ENCODE measurements at regions of chr9 and their contacts with region 1.

Region 1: DNA sequence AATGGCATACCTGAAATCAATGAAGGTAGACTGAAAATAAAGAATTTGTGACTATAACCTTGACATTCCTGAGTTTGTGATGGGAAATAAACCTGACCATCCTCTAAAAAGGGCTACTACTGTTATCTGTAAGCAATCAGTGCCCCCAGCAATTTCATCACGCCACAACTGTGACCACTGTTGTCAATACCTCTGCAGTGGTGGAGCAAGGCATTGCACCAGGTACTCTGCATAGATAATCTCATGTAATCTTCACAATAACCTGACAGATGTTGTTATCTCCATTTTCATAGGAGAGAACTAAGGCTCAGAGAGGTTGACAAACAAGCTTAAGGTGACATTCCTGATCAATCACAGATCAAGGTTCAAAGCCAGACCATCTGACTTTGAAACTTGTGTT is 38.5 kb upstream of the FRRS1L start:
- DNase-seq: no peak
- CTCF ChIP-seq: no peak

Region 2: DNA sequence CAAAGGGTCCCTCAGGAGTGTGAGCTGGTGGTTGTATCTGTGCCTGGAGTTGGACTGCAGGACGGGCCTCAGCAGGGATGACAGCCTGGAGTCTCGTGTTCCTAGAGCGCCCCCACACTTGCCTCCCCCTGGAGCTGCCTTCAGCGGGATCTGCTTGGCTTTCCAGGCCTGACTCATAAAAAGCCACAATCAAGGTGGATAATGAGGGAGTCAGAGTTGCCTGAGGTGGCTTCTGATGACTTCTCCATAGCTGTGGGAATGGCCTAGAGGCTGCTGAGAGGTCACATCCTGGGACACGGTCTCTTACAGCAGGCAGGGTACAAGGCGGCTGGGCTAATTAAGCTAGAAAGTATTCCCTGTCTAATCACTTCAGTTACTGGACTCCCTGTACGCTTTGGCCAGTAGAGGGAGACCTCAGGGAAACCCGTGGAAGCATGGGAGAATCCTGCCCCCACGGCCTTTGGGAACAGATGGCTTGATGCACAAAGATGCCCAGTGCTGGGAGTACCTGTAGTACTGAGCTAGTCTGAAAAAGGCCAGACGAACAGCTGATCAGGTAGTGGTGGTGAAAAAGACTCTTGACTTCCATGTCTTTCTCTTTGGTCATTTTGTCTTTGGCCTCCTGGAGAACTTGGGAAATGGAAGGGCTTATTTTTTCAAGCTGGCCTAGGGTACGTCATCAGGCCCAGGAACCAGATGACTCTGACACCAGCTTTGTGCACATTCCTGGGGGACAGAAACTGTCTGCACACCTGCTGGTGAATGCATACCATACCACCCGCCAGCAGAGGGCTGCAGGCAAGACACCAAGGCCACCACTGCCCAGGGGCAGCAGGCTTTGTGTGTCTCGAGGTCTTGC is 22.4 kb before region 1 on chr9:
- CTCF ChIA-PET with region 1: interaction called, 13 read pairs
- POLR2A ChIA-PET with region 1: no interaction called
- DNase-seq: peak; percentile 50
- CTCF ChIP-seq: peak; percentile 52

Region 3: GRCh38 chr9:109192732-109193361 is 12.7 kb before region 1 on chr9:
- CTCF ChIA-PET with region 1: interaction called, 16 read pairs
- POLR2A ChIA-PET with region 1: no interaction called
- DNase-seq: no peak
- CTCF ChIP-seq: peak; percentile 17

Region 4: DNA sequence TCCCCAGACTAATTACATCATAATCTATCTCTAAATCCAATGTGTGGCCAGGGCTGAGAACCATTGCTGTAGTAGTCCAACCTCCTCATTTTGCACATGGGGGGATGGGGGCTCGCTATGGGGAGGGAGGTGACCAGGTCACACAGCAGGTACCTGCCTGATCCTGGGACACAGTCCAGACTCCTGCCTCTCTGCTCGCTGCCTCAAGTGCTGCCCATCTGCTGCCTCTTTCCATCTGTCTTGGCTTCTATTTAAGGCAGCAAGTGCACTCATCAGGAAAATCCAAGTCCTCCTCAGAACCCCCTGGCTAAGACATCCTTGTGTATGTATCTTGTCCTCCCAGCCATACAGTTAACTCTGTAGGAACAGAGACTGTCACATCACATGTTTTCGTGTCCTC is 19.2 kb after region 1 on chr9:
- CTCF ChIA-PET with region 1: no interaction called
- POLR2A ChIA-PET with region 1: no interaction called
- DNase-seq: no peak
- CTCF ChIP-seq: no peak

Measured in GM10248 (cell line).